H1 (cell line): ENCODE measurements at regions of chr9 and their contacts with region 1.

Region 1: DNA sequence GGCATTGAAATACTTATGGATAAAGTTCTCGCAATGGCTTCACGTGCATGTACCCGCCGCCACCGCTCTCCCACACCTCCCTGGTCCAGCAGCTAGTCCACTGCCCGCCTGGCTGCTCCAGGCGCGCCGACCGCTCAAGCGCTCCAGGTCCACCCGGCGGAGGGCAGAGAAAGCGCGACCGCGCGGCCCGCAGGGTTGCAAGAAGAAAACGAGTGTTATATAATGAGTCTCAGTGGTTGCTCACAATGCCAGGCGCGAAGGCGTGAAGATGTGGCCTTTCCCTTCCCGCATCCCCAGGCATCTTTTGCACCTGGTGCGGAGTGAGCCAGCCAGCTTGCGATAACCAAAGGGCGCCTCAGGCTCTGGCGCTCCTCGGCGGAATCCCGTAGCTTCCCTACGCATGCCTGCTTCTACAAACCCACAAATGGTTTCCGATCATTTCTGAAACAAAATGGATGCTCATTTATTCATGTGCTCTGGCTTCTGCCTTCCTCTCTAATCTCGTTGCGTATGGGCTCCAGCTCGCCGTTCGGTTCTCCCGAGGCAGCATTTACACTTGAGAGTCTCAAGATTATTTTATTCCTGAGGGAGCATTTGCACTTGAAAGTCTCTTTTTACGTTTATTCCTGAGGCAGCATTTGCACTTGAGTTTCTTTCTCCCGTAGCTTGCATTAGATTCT is 25.7 kb downstream of the CDKN2A start:
- DNase-seq: peak in 1 of 2 experiments; percentile 59
- H3K4me3 ChIP-seq: peak overlapping the region in 1 of 4 experiments; percentile 25; a peak in 1 of 8 replicates
- H3K27ac ChIP-seq: no peak overlapping the region
- H3K4me1 ChIP-seq: peaks cover 7 to 25% (median 14%) of the 10 kb centered on the region in 4 experiments
- H3K27me3 ChIP-seq: peaks cover 80 to 100% (median 93%) of the 10 kb centered on the region in 4 experiments
- CTCF ChIP-seq: no peak
- EP300 ChIP-seq: no peak
- POLR2A ChIP-seq: no peak
- RAD21 ChIP-seq: no peak

Region 2: GRCh38 chr9:21995177-21996086 is 27.0 kb after region 1 on chr9:
- CTCF ChIA-PET with region 1: interaction called, 14 read pairs
- POLR2A ChIA-PET with region 1: interaction called, 5 read pairs
- DNase-seq: peak in 1 of 2 experiments; percentile 86
- H3K4me3 ChIP-seq: peak overlapping the region; percentile 47 to 80 (median 75)
- H3K27ac ChIP-seq: no peak overlapping the region
- H3K4me1 ChIP-seq: peaks cover 4 to 26% (median 10%) of the 10 kb centered on the region in 4 experiments; a peak in 6 of 7 replicates
- H3K27me3 ChIP-seq: peaks cover 25 to 70% (median 54%) of the 10 kb centered on the region in 4 experiments
- CTCF ChIP-seq: no peak
- EP300 ChIP-seq: no peak
- POLR2A ChIP-seq: no peak
- RAD21 ChIP-seq: no peak

Region 3: GRCh38 chr9:22060831-22061383 is 92.4 kb after region 1 on chr9:
- CTCF ChIA-PET with region 1: no interaction called
- POLR2A ChIA-PET with region 1: no interaction called
- DNase-seq: no peak
- H3K4me3 ChIP-seq: no peak overlapping the region
- H3K27ac ChIP-seq: no peak overlapping the region
- H3K4me1 ChIP-seq: no peaks in the 10 kb centered on the region
- H3K27me3 ChIP-seq: no peaks in the 10 kb centered on the region
- CTCF ChIP-seq: no peak
- EP300 ChIP-seq: no peak
- POLR2A ChIP-seq: no peak
- RAD21 ChIP-seq: no peak